ENCODE measurements at regions of chr4 and their contacts with region 1.

Region 1: GRCh38 chr4:112327965-112328733 is 31.0 kb downstream of the ALPK1 start:
- DNase-seq: no peak
- ATAC-seq: no peak

Region 2: GRCh38 chr4:112379306-112379705 is 51.2 kb after region 1 on chr4:
- intact Hi-C with region 1: no loop called
- DNase-seq: no peak
- ATAC-seq: no peak

Region 3: GRCh38 chr4:112523764-112524505 is 195.8 kb after region 1 on chr4:
- intact Hi-C with region 1: loop called in 1 of 2 experiments (anchors 10 kb)
- DNase-seq: peak; percentile 58 to 78
- ATAC-seq: peak; percentile 97